ENCODE measurements at regions of chr17 and their contacts with region 1.

Region 1: GRCh38 chr17:48804925-48805411 is 12.1 kb downstream of the TTLL6 start:
- DNase-seq: peak; percentile 39 to 49
- H3K4me3 ChIP-seq: no peak overlapping the region
- H3K27ac ChIP-seq: no peak overlapping the region
- H3K4me1 ChIP-seq: no peaks in the 10 kb centered on the region
- H3K27me3 ChIP-seq: no peaks in the 10 kb centered on the region
- CTCF ChIP-seq: peak; percentile 77 to 90 (median 86)
- POLR2A ChIP-seq: no peak

Region 2: DNA sequence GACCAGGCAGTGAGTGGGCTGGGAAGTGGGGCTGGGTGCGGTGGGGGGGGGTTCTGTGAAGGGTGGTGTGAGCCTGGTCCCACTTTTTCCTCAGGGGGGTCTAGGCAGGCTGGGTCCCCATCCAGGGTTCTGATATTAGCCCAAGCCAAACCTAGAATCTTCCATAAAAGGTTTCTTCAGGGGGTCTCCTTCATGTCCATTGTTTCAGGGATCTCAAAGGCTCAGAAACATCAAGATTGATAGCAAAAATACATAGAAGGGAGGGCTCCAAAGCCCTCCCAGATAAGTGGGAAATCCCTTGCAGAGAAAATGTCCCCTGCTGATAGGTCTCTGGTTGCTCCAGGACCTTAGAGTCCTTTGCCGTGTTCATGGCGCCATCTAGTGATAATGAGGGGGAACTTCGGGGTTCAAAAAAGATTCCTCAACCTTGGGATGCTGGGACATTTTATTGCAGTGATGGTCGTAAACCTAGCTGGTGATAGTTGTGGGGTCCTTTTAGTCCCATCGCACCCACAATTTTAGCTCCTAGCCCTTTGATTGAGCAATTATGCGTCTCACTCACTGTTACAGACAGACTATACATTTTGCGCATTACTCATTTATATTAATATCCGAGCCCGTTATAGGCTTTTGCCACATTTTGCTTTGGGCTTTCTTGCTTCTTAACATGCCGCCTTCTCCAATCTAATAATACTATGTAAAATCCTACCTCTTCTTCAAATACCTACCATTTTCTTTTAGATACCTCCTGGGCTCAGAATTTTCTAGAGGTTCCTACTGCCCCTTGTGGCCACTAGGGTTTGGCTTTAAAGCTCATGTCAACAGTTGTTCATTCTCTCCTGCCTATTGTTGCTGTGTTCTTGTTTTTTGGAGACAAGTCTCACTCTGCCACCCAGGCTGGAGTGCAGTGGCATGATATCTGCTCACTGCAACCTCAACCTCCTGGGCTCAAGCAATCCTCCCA is 227.3 kb after region 1 on chr17:
- intact Hi-C with region 1: loop called (anchors 10 kb)
- DNase-seq: peak; percentile 25 to 30
- H3K4me3 ChIP-seq: no peak overlapping the region
- H3K27ac ChIP-seq: no peak overlapping the region
- H3K4me1 ChIP-seq: no peaks in the 10 kb centered on the region
- H3K27me3 ChIP-seq: no peaks in the 10 kb centered on the region
- CTCF ChIP-seq: peak; percentile 66 to 72 (median 68)
- POLR2A ChIP-seq: no peak